ENCODE measurements at regions of chr7 and their contacts with region 1.

Region 1: DNA sequence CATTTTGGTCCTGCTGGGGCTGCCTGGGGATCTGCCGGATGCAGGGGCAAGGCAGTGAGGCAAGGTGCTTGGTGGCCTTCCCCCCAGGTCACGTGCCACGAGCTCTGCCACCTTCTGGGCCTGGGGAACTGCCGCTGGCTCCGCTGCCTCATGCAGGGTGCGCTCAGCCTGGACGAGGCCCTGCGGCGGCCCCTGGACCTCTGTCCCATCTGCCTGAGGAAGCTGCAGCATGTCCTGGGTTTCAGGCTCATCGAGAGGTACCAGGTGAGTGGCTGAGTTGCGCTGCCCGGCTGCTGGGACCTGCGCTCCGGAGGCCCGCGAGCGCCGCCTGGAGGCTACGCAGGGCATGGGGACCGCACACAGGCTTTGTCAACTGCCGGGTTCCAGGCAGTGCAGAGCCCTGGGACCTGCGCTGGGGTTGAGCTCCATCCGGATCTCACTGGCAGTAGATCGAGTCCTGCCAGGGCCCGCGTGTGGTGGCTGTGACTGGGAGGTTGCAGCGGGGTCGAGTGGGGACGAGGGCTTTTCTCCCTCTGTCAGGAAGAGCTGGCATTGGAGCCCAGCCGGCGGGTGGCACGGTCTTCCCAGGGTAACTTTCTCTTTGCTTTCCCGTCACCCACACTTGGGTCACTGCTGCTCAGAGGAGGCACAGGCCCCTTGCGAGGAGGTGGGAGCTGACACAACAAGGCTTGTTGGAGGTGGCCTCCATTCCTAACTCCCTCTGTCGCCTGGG is 21.7 kb downstream of the AMZ1 start:
- DNase-seq: peak; percentile 73 to 74
- ATAC-seq: peak; percentile 83 to 95
- H3K4me3 ChIP-seq: no peak overlapping the region
- H3K27ac ChIP-seq: 0 out of 6 replicates have a peak overlapping the region, but pooled peaks of 1 of the 2 experiments have one; percentile 3
- H3K4me1 ChIP-seq: no peaks in the 10 kb centered on the region
- CTCF ChIP-seq: peak; percentile 80
- EP300 ChIP-seq: no peak
- POLR2A ChIP-seq: no peak
- RAD21 ChIP-seq: peak; percentile 79 to 80

Region 2: GRCh38 chr7:1812509-1813393 is 897.0 kb before region 1 on chr7:
- CTCF ChIA-PET with region 1: no interaction called
- POLR2A ChIA-PET with region 1: no interaction called
- DNase-seq: peak; percentile 27 to 67
- ATAC-seq: peak; percentile 78 to 85; a peak in 5 of 6 replicates
- H3K4me3 ChIP-seq: no peak overlapping the region
- H3K27ac ChIP-seq: no peak overlapping the region
- H3K4me1 ChIP-seq: no peaks in the 10 kb centered on the region
- CTCF ChIP-seq: peak; percentile 54
- EP300 ChIP-seq: no peak
- POLR2A ChIP-seq: no peak
- RAD21 ChIP-seq: peak; percentile 14 to 49; a peak in 3 of 5 replicates

Region 3: GRCh38 chr7:2649991-2650390 is 59.7 kb before region 1 on chr7:
- CTCF ChIA-PET with region 1: no interaction called
- POLR2A ChIA-PET with region 1: no interaction called
- DNase-seq: no peak
- ATAC-seq: no peak
- H3K4me3 ChIP-seq: no peak overlapping the region
- H3K27ac ChIP-seq: no peak overlapping the region
- H3K4me1 ChIP-seq: peaks cover 4% of the 10 kb centered on the region; the same call in 1 of the 3 replicates
- CTCF ChIP-seq: no peak
- EP300 ChIP-seq: no peak
- POLR2A ChIP-seq: no peak
- RAD21 ChIP-seq: no peak

Region 4: DNA sequence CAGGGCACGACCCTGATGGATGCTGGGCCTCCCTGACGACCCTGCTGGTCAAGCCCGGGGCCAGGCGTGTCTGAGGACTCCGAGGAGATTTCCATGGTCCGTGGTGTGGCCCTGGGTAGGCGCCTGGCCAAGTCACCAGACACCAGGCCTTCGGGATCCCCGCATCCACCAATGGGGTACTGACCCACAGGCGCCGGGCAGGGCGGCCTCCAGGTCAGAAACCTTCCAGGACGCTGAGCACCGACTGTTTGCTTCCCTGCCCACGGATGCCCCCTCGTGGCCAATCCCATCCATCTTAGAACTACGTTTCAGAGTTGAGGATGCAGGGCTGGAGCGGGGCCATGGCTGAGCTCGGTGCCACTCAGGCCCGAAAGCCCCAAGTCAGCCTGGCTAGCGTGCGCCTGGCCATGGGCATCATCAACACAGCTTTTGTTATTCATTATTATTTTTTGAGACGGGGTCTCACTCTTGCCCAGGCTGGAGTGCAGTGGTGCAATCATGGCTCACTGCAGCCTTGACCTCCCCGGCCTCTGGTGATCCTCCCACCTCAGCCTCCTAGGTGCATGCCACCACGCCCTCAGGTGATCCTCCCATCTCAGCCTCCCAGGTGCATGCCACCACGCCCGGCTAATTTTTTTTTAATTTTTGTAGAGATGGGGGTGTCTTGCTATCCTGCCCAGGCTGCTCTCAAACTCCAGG is 28.8 kb before region 1 on chr7:
- CTCF ChIA-PET with region 1: interaction called, 36 read pairs
- POLR2A ChIA-PET with region 1: no interaction called
- DNase-seq: peak; percentile 77 to 93
- ATAC-seq: peak; percentile 82 to 94
- H3K4me3 ChIP-seq: no peak overlapping the region
- H3K27ac ChIP-seq: no peak overlapping the region
- H3K4me1 ChIP-seq: no peaks in the 10 kb centered on the region
- CTCF ChIP-seq: peak; percentile 79
- EP300 ChIP-seq: no peak
- POLR2A ChIP-seq: no peak
- RAD21 ChIP-seq: peak; percentile 83 to 88

Region 5: DNA sequence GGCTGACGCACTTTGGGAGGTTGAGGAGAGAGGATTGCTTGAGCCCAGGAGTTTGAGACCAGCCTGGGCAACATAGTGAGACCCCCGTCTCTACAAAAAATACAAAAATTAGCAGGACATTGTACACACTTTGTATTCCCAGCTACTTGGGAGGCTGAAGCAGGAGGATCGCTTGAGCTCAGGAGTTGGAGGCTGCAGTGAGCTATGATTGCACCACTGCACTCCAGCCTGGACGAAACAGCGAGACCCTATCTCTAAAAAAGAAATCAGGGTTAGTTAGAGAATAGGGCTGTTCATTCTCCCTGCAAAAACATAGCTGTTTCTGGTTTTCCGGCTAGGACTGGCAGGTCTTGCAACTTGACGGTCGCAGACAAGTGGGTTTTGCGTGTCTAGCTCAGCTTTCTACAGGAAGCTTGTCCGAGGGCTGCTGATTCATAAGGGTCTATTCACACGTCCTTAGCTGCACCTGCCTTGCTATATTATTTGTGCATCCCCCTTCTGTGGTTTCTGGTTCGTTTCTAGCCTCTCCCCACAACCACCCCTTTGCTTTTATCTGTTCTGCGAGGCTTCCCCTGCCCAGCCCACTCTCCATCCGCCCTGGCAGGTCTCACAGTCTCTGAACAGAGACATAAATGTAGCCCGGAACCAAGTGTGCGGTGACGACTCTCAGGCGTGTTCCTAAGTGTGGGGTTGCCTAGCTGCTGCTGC is 11.0 kb before region 1 on chr7:
- CTCF ChIA-PET with region 1: interaction called, 32 read pairs
- POLR2A ChIA-PET with region 1: no interaction called
- DNase-seq: no peak
- ATAC-seq: no peak
- H3K4me3 ChIP-seq: no peak overlapping the region
- H3K27ac ChIP-seq: no peak overlapping the region
- H3K4me1 ChIP-seq: no peaks in the 10 kb centered on the region
- CTCF ChIP-seq: no peak
- EP300 ChIP-seq: no peak
- POLR2A ChIP-seq: no peak
- RAD21 ChIP-seq: no peak

Region 6: GRCh38 chr7:2729701-2730417 is 20.1 kb after region 1 on chr7:
- CTCF ChIA-PET with region 1: interaction called, 36 read pairs
- POLR2A ChIA-PET with region 1: no interaction called
- DNase-seq: no peak
- ATAC-seq: no peak
- H3K4me3 ChIP-seq: no peak overlapping the region
- H3K27ac ChIP-seq: no peak overlapping the region
- H3K4me1 ChIP-seq: no peaks in the 10 kb centered on the region
- CTCF ChIP-seq: no peak
- EP300 ChIP-seq: no peak
- POLR2A ChIP-seq: no peak
- RAD21 ChIP-seq: no peak

Region 7: GRCh38 chr7:2757904-2758672 is 48.4 kb after region 1 on chr7:
- CTCF ChIA-PET with region 1: interaction called, 15 read pairs
- POLR2A ChIA-PET with region 1: interaction called, 3 read pairs
- DNase-seq: peak; percentile 72 to 97
- ATAC-seq: peak; percentile 84 to 87
- H3K4me3 ChIP-seq: peak overlapping the region; percentile 16; the same call in 1 of the 3 replicates
- H3K27ac ChIP-seq: peak overlapping the region; percentile 92 to 95
- H3K4me1 ChIP-seq: peaks cover 48% of the 10 kb centered on the region
- CTCF ChIP-seq: no peak
- EP300 ChIP-seq: peak in 1 of 2 experiments; percentile 56; a peak in 2 of 5 replicates
- POLR2A ChIP-seq: no peak
- RAD21 ChIP-seq: peak; percentile 11 to 16; a peak in 1 of 5 replicates

Region 8: DNA sequence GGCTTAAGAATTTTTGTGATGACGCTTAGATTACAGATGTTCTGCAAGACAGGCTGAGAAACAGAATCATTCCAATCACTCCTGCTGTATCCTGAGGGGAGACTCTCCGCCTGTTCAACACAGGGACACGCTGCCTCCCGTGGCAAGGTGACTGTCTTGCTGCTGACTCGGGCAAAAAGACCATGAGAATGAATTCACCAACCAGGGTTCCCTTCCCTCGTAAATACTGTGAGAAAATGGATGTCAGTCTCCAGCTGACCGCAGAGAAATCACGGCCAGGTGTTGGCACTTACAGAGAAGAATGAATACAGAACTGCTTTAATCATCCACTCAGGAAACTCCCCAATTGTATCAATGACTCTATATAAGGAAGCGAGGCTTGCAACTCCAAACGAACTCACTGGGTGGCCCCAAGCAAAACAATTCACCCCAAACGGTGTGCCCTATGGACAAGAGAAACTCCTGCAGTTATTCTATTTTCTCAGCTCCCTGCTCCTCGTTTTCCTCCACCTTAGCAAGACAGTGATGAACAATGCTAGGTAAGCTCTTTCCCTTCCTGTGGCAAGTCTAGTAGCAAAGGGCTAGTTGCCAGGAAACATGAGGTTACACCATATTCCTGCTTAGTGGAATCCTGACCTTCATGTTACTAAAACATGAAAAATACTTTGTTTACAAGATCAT is 111.6 kb after region 1 on chr7:
- CTCF ChIA-PET with region 1: interaction called, 14 read pairs
- POLR2A ChIA-PET with region 1: no interaction called
- DNase-seq: peak; percentile 56 to 62
- ATAC-seq: peak; percentile 71 to 74
- H3K4me3 ChIP-seq: 0 out of 3 replicates have a peak overlapping the region, but pooled peaks have one; percentile 3
- H3K27ac ChIP-seq: peak overlapping the region; percentile 77 to 89
- H3K4me1 ChIP-seq: peaks cover 63% of the 10 kb centered on the region
- CTCF ChIP-seq: no peak
- EP300 ChIP-seq: no peak; a peak in 1 of 5 replicates
- POLR2A ChIP-seq: no peak
- RAD21 ChIP-seq: peak in 1 of 2 experiments; percentile 25; a peak in 1 of 5 replicates

Region 9: GRCh38 chr7:2956526-2957368 is 247.0 kb after region 1 on chr7:
- CTCF ChIA-PET with region 1: no interaction called
- POLR2A ChIA-PET with region 1: no interaction called
- DNase-seq: peak; percentile 52 to 76
- ATAC-seq: peak; percentile 74 to 85; a peak in 4 of 6 replicates
- H3K4me3 ChIP-seq: no peak overlapping the region
- H3K27ac ChIP-seq: peak overlapping the region; percentile 74 to 91
- H3K4me1 ChIP-seq: peaks cover 14% of the 10 kb centered on the region
- CTCF ChIP-seq: no peak
- EP300 ChIP-seq: no peak
- POLR2A ChIP-seq: no peak
- RAD21 ChIP-seq: no peak

Region 10: GRCh38 chr7:3282457-3282856 is 572.7 kb after region 1 on chr7:
- CTCF ChIA-PET with region 1: no interaction called
- POLR2A ChIA-PET with region 1: no interaction called
- DNase-seq: no peak
- ATAC-seq: no peak
- H3K4me3 ChIP-seq: no peak overlapping the region
- H3K27ac ChIP-seq: no peak overlapping the region
- H3K4me1 ChIP-seq: no peaks in the 10 kb centered on the region
- CTCF ChIP-seq: no peak
- EP300 ChIP-seq: no peak
- POLR2A ChIP-seq: no peak
- RAD21 ChIP-seq: no peak

Measured in A549 (cell line).